ENCODE measurements at regions of chr9 and their contacts with region 1.

Region 1: GRCh38 chr9:122036988-122037387 is 56.1 kb downstream of the TTLL11 start:
- DNase-seq: no peak
- ATAC-seq: no peak
- H3K4me3 ChIP-seq: no peak overlapping the region
- H3K27ac ChIP-seq: peak overlapping the region; percentile 17
- H3K4me1 ChIP-seq: peaks cover 57% of the 10 kb centered on the region
- H3K27me3 ChIP-seq: no peaks in the 10 kb centered on the region
- CTCF ChIP-seq: no peak

Region 2: DNA sequence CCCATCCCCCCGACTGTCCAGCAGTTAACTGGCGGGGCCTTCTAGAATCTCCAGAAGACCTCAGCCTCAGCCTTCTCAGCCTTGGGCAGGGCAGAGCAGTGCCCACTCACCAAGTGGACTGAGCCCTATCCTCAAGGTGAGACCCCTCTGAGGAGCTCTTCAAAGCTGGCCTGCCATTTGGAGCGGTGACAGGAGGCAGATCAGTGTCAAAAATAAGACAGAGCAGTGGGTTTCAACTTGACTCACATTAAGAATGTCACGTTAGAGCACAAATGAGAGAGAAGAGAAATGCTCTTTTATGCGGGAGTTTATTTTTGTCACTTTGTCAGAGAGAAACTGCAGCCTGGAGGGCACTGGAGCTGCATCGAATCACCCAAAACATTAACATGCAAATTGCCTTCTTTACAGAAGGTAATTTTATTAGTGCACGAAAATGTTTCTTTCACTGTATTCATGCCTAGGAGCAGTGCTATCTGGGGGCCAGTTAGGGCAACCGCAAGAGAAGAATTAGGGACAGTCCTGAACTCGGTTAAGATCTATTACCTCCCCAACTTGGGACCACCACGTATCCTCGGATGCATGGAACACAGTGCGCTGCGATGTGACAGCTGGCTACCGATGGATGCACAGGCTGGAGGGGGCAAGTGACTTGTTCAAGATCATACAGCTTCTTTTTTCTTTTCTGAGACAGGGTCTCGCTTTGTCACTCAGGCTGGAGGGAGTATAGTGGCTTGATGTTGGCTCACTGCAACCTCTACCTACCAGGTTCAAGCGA is 197.1 kb before region 1 on chr9:
- intact Hi-C with region 1: no loop called
- DNase-seq: no peak
- ATAC-seq: no peak
- H3K4me3 ChIP-seq: no peak overlapping the region
- H3K27ac ChIP-seq: no peak overlapping the region
- H3K4me1 ChIP-seq: peaks cover 11% of the 10 kb centered on the region
- H3K27me3 ChIP-seq: no peaks in the 10 kb centered on the region
- CTCF ChIP-seq: no peak

Region 3: DNA sequence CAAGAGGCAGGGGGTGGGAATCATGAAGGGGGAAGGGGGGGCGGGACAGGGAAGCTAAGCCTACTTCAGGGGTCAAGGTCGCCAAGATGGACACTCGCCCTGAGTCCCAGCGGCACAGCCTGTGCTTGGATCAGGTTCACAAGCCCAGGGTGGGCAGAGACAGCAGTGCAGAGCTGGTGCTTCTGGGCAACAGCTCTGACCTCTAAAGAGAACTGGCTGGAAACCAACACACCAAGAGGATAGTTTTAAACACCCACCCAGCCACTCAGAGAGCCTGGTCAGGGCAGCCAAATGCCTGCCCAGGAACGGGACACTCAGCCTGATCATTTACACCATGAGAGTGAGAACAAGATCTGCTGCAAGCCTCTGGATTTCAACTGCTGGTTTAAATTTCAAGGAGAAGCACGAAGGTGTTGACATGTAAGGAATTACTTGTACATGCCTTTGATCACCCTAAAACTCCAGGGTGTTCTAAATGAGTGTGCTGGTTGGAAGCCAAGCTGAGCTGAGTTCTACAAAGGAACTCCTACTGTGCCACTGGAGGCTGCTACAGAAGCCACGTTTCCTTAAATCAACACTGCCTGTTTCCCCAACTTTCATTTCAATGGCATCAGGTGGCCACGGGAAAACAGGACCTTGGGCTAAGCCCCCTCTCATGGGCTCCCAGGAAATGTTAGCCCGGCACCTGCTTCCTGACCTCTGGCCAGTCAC is 35.3 kb before region 1 on chr9:
- intact Hi-C with region 1: loop called in 1 of 2 experiments (anchors 5 kb)
- DNase-seq: peak; percentile 51 to 77
- ATAC-seq: peak; percentile 82 to 92 (median 91)
- H3K4me3 ChIP-seq: peak overlapping the region; percentile 25
- H3K27ac ChIP-seq: peak overlapping the region; percentile 86
- H3K4me1 ChIP-seq: peaks cover 41% of the 10 kb centered on the region
- H3K27me3 ChIP-seq: no peaks in the 10 kb centered on the region
- CTCF ChIP-seq: no peak

Region 4: DNA sequence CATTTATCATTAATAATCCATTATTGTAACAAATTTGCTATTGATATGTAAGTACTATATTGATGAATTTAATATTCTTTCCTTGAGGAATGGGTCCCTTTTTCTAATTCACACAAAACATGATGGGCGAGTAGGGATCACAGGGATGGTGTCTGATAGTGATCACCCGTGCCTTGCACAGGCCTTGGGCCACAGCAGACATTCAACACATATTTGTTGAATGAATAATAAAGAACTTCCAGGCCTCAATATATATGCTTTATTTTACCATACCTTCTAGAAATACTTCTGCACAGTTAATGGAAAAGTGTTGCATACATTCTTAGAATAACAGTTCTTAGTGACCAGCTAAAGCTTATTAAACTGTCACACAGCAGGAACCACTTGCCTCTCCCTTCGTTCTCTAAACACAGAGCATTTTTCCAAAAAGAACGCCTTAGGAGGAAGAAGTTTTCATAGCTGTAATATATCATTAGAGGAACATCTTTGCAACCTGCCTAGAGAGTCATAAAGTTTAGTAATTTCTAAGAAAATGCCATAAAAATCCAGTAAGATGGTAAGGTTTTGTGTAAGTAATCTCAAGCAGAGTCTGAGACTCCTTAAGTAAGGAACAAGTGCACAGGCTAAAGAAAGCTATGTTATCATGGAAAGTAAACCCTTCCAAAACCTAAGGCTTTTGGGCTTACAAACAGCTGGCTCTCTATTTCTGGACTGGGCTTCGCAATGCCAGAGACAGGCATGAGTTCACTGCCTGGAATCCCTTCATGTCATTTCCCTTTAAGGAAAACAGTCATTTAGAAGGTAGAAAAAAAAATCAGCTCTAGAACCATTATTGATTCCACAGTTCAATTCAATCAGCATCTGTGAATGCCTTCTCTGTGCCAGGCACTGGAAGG is 38.4 kb after region 1 on chr9:
- intact Hi-C with region 1: loop called in 1 of 2 experiments (anchors 5 kb)
- DNase-seq: no peak
- ATAC-seq: peak; percentile 79 to 93 (median 87)
- H3K4me3 ChIP-seq: peak overlapping the region; percentile 41
- H3K27ac ChIP-seq: peak overlapping the region; percentile 87
- H3K4me1 ChIP-seq: peaks cover 63% of the 10 kb centered on the region
- H3K27me3 ChIP-seq: no peaks in the 10 kb centered on the region
- CTCF ChIP-seq: no peak

Region 5: GRCh38 chr9:122125158-122125508 is 88.1 kb after region 1 on chr9:
- intact Hi-C with region 1: no loop called
- DNase-seq: peak; percentile 82 to 88
- ATAC-seq: peak; percentile 82 to 93 (median 88)
- H3K4me3 ChIP-seq: no peak overlapping the region
- H3K27ac ChIP-seq: no peak overlapping the region
- H3K4me1 ChIP-seq: peaks cover 6% of the 10 kb centered on the region
- H3K27me3 ChIP-seq: peaks cover 0 to 13% (median 0%) of the 10 kb centered on the region in 3 donors
- CTCF ChIP-seq: peak; percentile 96